ENCODE measurements at regions of chr12 and their contacts with region 1.

Region 1: GRCh38 chr12:75672200-75672599 is 160.8 kb upstream of the KRR1 start:
- DNase-seq: no peak
- H3K4me3 Mint-ChIP-seq: no peak overlapping the region
- H3K27ac Mint-ChIP-seq: no peak overlapping the region
- H3K4me1 Mint-ChIP-seq: no peaks in the 10 kb centered on the region
- H3K27me3 Mint-ChIP-seq: peaks cover 3% of the 10 kb centered on the region

Region 2: GRCh38 chr12:75712252-75712651 is 40.1 kb after region 1 on chr12:
- intact Hi-C with region 1: loop called (anchors 5 kb)
- DNase-seq: no peak
- H3K4me3 Mint-ChIP-seq: no peak overlapping the region
- H3K27ac Mint-ChIP-seq: no peak overlapping the region
- H3K4me1 Mint-ChIP-seq: peaks cover 5% of the 10 kb centered on the region
- H3K27me3 Mint-ChIP-seq: peaks cover 4% of the 10 kb centered on the region

Measured in activated T-helper 1 cell treated with anti-CD3 and anti-CD28 coated beads, Interleukin-12 subunit alpha, Interleukin-12 subunit beta, Interleukin-2, Interleukin-4 antibody, amounts not matched to agents 30 ng/mL and 10 ng/mL and 1 ng/mL, durations not matched to agents 14 hours and 24 hours and 36 hours (primary cell).